GM12878 (cell line): ENCODE measurements at regions of chr16 and their contacts with region 1.

Region 1: GRCh38 chr16:19853742-19854542 is 30.7 kb downstream of the GPRC5B start:
- DNase-seq: no peak
- ATAC-seq: peak; percentile 74
- H3K4me3 ChIP-seq: no peak overlapping the region
- H3K27ac ChIP-seq: no peak overlapping the region
- H3K4me1 ChIP-seq: no peaks in the 10 kb centered on the region
- H3K27me3 ChIP-seq: no peaks in the 10 kb centered on the region
- CTCF ChIP-seq: no peak
- EP300 ChIP-seq: no peak
- POLR2A ChIP-seq: no peak
- RAD21 ChIP-seq: no peak

Region 2: DNA sequence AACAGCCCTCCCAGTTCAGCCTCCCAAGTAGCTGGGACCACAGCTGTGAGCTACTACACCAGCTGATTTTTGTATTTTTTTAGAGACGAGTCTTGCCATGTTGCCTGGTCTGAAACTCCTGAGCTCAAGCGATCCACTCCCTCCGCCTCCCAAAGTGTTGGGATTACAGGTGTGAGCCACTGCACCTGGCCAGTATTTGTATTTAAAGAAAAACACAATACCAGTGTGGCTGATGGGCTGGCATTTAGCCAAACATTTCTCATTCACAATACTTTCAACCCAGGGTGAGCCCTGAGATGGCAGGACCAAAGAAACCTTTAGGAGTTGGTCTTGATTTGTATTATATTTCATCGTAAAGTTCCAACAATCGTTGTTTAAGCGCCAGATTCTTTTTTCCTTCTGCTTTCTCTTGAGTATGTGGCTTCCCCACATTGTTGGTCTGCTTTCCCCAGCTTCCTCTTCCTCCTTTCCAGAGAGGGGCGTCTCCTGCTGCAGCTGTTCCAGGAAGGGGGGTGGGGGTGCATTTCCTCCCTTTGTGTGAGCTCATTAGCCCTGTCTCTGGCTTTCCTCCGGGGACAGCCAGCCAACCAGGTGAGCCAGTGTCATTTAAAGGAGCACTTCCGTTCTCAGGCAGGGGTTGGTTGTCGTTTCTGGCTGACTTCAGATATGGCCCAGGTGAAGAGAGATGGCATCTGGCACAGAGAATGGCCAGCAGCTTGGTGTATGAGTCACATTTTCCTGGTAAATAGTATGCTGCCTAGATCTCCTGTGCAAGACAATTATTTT is 49.2 kb before region 1 on chr16:
- CTCF ChIA-PET with region 1: no interaction called
- POLR2A ChIA-PET with region 1: interaction called, 3 read pairs
- RAD21 ChIA-PET with region 1: no interaction called
- SMC1A ChIA-PET with region 1: no interaction called
- in situ Hi-C with region 1: no loop called
- intact Hi-C with region 1: loop called (anchors 10 kb)
- DNase-seq: no peak
- ATAC-seq: no peak
- H3K4me3 ChIP-seq: no peak overlapping the region
- H3K27ac ChIP-seq: no peak overlapping the region
- H3K4me1 ChIP-seq: peaks cover 4% of the 10 kb centered on the region; the same call in 1 of the 2 replicates
- H3K27me3 ChIP-seq: no peaks in the 10 kb centered on the region
- CTCF ChIP-seq: no peak
- EP300 ChIP-seq: no peak
- POLR2A ChIP-seq: no peak
- RAD21 ChIP-seq: no peak